HepG2 (cell line): ENCODE measurements at regions of chr13 and their contacts with region 1.

Region 1: GRCh38 chr13:29713839-29714238 is 118.4 kb upstream of the SLC7A1 start:
- DNase-seq: no peak
- ATAC-seq: no peak; the same call in 2 of the 3 replicates
- H3K4me3 ChIP-seq: no peak overlapping the region
- H3K27ac ChIP-seq: no peak overlapping the region
- H3K4me1 ChIP-seq: no peaks in the 10 kb centered on the region
- H3K27me3 ChIP-seq: peaks cover 0 to 3% of the 10 kb centered on the region in 2 experiments; a peak in 1 of 5 replicates
- CTCF ChIP-seq: peak; percentile 57
- EP300 ChIP-seq: no peak
- POLR2A ChIP-seq: no peak
- RAD21 ChIP-seq: no peak

Region 2: GRCh38 chr13:29472332-29472961 is 241.4 kb before region 1 on chr13:
- CTCF ChIA-PET with region 1: interaction called, 50 read pairs
- POLR2A ChIA-PET with region 1: no interaction called
- in situ Hi-C with region 1: no loop called
- intact Hi-C with region 1: no loop called
- DNase-seq: peak; percentile 59
- ATAC-seq: peak; percentile 92
- H3K4me3 ChIP-seq: no peak overlapping the region
- H3K27ac ChIP-seq: no peak overlapping the region
- H3K4me1 ChIP-seq: no peaks in the 10 kb centered on the region
- H3K27me3 ChIP-seq: peaks cover 0 to 6% of the 10 kb centered on the region in 2 experiments; a peak in 2 of 5 replicates
- CTCF ChIP-seq: peak; percentile 85
- EP300 ChIP-seq: no peak
- POLR2A ChIP-seq: no peak
- RAD21 ChIP-seq: peak; percentile 67

Region 3: GRCh38 chr13:29508130-29508875 is 205.5 kb before region 1 on chr13:
- CTCF ChIA-PET with region 1: interaction called, 26 read pairs
- POLR2A ChIA-PET with region 1: no interaction called
- in situ Hi-C with region 1: loop called (anchors 5 kb)
- intact Hi-C with region 1: no loop called
- DNase-seq: peak; percentile 60
- ATAC-seq: peak; percentile 88
- H3K4me3 ChIP-seq: no peak overlapping the region
- H3K27ac ChIP-seq: no peak overlapping the region
- H3K4me1 ChIP-seq: peaks cover 12% of the 10 kb centered on the region
- H3K27me3 ChIP-seq: peaks cover 0 to 10% of the 10 kb centered on the region in 2 experiments; a peak in 1 of 5 replicates
- CTCF ChIP-seq: peak; percentile 94
- EP300 ChIP-seq: no peak
- POLR2A ChIP-seq: no peak
- RAD21 ChIP-seq: peak; percentile 75